ENCODE measurements at regions of chr7 and their contacts with region 1.

Region 1: DNA sequence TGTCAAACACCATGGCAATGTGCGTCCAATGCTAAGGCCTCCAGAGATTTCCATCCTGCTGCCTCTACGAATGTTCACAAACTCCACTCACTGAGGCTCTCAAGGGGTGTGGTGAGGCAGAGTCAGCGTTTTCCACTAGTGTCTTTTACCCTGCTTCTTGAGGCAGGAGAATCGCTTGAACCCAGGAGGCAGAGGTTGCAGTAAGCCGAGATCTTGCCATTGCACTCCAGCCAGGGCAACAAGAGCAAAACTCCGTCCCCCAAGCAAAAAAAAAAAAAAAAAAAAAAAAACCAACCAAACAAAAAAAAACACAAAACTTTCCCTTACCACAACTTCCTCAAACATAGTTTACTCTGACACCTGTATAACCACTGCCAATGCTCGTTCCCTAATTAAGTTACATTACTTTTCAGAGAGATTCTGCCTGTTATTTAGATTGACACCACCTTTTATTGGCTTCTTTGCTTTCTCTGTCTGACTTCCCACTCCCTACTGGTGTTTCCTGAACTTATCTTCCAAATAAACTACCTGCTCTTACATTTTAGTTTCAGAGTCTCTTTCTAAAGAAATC is 102.1 kb upstream of the ZNF746 start:
- DNase-seq: no peak
- H3K4me3 ChIP-seq: no peak overlapping the region
- CTCF ChIP-seq: no peak

Region 2: GRCh38 chr7:149547126-149547525 is 52.6 kb before region 1 on chr7:
- in situ Hi-C with region 1: loop called (anchors 5 kb)
- DNase-seq: no peak
- H3K4me3 ChIP-seq: no peak overlapping the region
- CTCF ChIP-seq: no peak

Measured in astrocyte of the cerebellum (primary cell).